Right lobe of liver (tissue), 6 donors: ENCODE measurements at regions of chr1 and their contacts with region 1.

Region 1: GRCh38 chr1:68327414-68327813 is 95.1 kb upstream of the WLS start:
- DNase-seq: no peak
- ATAC-seq: no peak
- H3K4me3 ChIP-seq: no peak overlapping the region
- H3K27ac ChIP-seq: no peak overlapping the region
- H3K4me1 ChIP-seq: no peaks in the 10 kb centered on the region
- H3K27me3 ChIP-seq: no peaks in the 10 kb centered on the region
- CTCF ChIP-seq: no peak
- POLR2A ChIP-seq: no peak

Region 2: DNA sequence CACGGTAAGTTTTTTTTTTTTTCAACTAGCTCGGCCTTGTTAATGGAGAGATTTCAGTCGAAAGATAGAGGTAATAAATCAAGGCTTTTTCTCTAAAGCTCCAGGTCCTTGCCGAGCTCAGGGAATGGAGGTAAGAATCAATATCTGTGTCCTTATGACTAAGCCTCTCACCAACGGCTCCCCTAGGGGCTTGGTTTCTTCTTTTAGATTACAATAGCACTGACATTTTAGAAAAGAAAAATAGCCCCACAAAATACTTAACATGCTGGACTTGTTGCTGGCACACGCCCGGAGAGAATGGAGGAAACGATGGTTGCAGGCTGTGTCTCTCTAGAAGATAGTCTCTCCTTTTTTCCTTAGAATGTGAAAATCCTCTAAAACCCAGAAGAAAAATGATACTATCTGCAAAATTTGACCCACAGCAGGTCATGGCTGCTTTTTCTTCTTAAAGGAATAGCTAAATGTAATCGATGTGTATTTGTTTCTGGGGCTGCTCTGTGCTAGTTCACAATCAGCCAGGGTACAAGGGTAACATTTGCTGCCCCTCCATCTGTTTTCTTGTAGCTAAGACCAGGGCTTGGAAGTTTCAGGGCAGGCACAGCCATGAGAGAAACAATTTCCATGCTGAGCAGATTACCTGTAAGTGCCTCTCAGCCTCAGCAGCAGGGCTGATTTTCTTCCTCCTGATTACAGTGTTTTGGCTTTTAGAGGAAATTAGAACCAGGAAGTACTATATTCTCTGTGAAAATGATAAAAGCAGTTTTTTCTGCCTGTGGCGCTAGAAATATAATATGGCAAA is 407.9 kb before region 1 on chr1:
- intact Hi-C with region 1: no loop called
- DNase-seq: no peak
- ATAC-seq: no peak
- H3K4me3 ChIP-seq: no peak overlapping the region
- H3K27ac ChIP-seq: no peak overlapping the region
- H3K4me1 ChIP-seq: no peaks in the 10 kb centered on the region
- H3K27me3 ChIP-seq: no peaks in the 10 kb centered on the region
- CTCF ChIP-seq: no peak
- POLR2A ChIP-seq: no peak

Region 3: DNA sequence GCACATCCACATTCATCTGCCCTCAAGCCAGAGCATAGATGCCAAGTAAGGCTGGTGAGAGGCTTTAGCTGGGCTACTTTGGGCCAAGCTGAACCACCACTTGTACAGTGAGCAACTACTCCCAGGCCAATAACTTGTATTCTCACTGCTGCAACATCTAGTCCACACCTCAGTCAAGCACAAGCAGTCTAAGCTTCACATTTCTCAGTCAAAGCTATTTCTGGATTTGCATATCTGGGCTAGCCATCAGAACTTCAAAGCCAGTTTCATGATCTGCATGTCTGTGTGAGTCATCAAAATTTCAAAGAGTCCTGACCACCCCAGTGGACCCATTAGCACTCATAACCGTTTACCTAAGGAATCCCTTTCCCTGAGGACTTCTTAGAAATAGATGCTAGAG is 199.3 kb before region 1 on chr1:
- intact Hi-C with region 1: loop called in 1 of 2 experiments (anchors 5 kb)
- DNase-seq: no peak
- ATAC-seq: no peak
- H3K4me3 ChIP-seq: no peak overlapping the region
- H3K27ac ChIP-seq: no peak overlapping the region
- H3K4me1 ChIP-seq: no peaks in the 10 kb centered on the region
- H3K27me3 ChIP-seq: no peaks in the 10 kb centered on the region
- CTCF ChIP-seq: no peak
- POLR2A ChIP-seq: no peak